ENCODE measurements at regions of chr2 and their contacts with region 1.

Region 1: DNA sequence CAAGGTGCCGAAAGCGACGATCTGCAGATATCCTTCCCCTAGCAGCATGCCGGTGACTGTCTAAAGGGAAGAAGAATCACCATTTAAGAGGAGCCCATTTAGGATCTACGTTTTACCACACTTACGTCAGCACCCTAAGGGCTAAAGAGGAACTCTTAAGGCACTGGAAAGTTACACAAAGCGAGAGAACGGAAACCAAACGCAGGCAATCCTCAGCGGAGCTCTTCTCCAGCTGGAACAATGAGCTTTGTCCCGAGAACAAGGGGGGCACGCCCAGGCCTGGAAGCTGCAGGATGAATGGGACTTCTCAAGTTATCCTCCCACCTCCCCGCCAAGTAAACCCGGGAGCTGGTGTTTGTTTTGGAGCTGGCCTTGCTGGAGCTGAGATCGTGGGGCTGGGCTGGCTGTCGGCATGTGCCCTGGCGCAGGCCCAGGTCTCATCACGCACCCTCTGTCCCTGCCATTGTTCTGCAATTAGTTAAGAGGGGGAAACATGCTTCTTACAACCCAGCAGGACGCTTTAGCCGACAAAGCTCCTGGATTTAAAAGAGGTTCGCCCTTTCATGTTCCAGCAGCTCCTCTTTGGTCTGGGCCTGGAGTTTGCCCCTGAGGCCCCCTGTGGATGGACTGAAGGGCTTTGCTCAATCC is 36.4 kb downstream of the PXDN start:
- DNase-seq: peak; percentile 90
- ATAC-seq: peak; percentile 72
- H3K4me3 ChIP-seq: no peak overlapping the region
- H3K27ac ChIP-seq: peak overlapping the region; percentile 10
- H3K4me1 ChIP-seq: peaks cover 24% of the 10 kb centered on the region
- H3K27me3 ChIP-seq: no peaks in the 10 kb centered on the region
- CTCF ChIP-seq: no peak
- POLR2A ChIP-seq: no peak
- RAD21 ChIP-seq: 0 out of 2 replicates have a peak, but pooled peaks have one; percentile 14

Region 2: GRCh38 chr2:1742681-1743395 is 34.9 kb after region 1 on chr2:
- CTCF ChIA-PET with region 1: no interaction called
- POLR2A ChIA-PET with region 1: no interaction called
- dilution Hi-C with region 1: no loop called
- in situ Hi-C with region 1: no loop called
- intact Hi-C with region 1: loop called (anchors 5 kb)
- DNase-seq: peak; percentile 90
- ATAC-seq: peak; percentile 55
- H3K4me3 ChIP-seq: peak overlapping the region; percentile 52
- H3K27ac ChIP-seq: peak overlapping the region; percentile 80
- H3K4me1 ChIP-seq: peaks cover 37% of the 10 kb centered on the region
- H3K27me3 ChIP-seq: no peaks in the 10 kb centered on the region
- CTCF ChIP-seq: peak; percentile 68
- POLR2A ChIP-seq: peak; percentile 55; the same call in 1 of the 2 replicates
- RAD21 ChIP-seq: peak; percentile 76